K562 (cell line): ENCODE measurements at regions of chr5 and their contacts with region 1.

Region 1: GRCh38 chr5:2149196-2149541 is 266.4 kb upstream of the IRX4 start:
- DNase-seq: no peak
- ATAC-seq: no peak
- H3K4me3 ChIP-seq: no peak overlapping the region
- H3K27ac ChIP-seq: no peak overlapping the region
- H3K4me1 ChIP-seq: no peaks in the 10 kb centered on the region
- H3K27me3 ChIP-seq: peaks cover 2 to 25% of the 10 kb centered on the region in 2 experiments; a peak in 2 of 5 replicates
- CTCF ChIP-seq: no peak
- EP300 ChIP-seq: no peak
- POLR2A ChIP-seq: no peak
- RAD21 ChIP-seq: no peak

Region 2: GRCh38 chr5:1737790-1738405 is 411.3 kb before region 1 on chr5:
- CTCF ChIA-PET with region 1: no interaction called
- POLR2A ChIA-PET with region 1: no interaction called
- in situ Hi-C with region 1: no loop called
- intact Hi-C with region 1: loop called (anchors 2 kb)
- DNase-seq: peak; percentile 61 to 82 (median 77)
- ATAC-seq: peak; percentile 97
- H3K4me3 ChIP-seq: no peak overlapping the region
- H3K27ac ChIP-seq: no peak overlapping the region
- H3K4me1 ChIP-seq: no peaks in the 10 kb centered on the region
- H3K27me3 ChIP-seq: peaks cover 0 to 16% of the 10 kb centered on the region in 2 experiments; a peak in 3 of 5 replicates
- CTCF ChIP-seq: peak; percentile 72 to 73 (median 73)
- EP300 ChIP-seq: no peak
- POLR2A ChIP-seq: no peak
- RAD21 ChIP-seq: peak in 1 of 2 experiments; percentile 67; a peak in 2 of 4 replicates

Region 3: GRCh38 chr5:2124434-2125170 is 24.6 kb before region 1 on chr5:
- CTCF ChIA-PET with region 1: no interaction called
- POLR2A ChIA-PET with region 1: no interaction called
- in situ Hi-C with region 1: no loop called
- intact Hi-C with region 1: no loop called
- DNase-seq: no peak
- ATAC-seq: no peak
- H3K4me3 ChIP-seq: no peak overlapping the region
- H3K27ac ChIP-seq: no peak overlapping the region
- H3K4me1 ChIP-seq: no peaks in the 10 kb centered on the region
- H3K27me3 ChIP-seq: peaks cover 11 to 27% of the 10 kb centered on the region in 2 experiments; a peak in 4 of 5 replicates
- CTCF ChIP-seq: no peak
- EP300 ChIP-seq: no peak
- POLR2A ChIP-seq: no peak
- RAD21 ChIP-seq: no peak